Activated CD8-positive, alpha-beta T cell treated with anti-CD3 and anti-CD28 coated beads, Interleukin-2, amount 10 ng/mL, durations not matched to agents 7 days and 5 days (primary cell): ENCODE measurements at regions of chr3 and their contacts with region 1.

Region 1: DNA sequence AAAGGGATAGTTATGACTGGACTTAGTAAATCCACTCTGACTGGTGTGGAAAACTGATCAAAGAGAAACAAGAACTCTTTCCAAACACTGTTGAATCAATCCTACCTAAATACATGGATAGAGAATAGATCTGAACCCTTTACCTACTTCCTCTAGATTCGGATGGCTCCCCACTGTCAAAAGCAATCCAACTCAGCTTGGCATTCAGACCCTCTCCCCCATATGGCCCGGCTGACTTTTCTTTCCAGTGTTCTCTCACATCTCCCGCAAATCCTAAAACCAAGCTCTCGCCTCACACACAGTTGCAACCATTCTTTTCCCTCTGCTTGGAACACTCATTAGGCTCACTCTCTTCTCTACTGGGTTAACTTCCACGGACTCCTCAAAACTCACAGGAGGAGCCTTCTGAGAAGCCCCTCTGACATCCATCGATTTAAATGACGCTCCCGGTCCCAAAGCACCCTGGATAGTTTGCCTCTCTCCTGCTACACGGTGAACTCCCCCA is 639 bp downstream of the SPICE1 start:
- DNase-seq: no peak
- ATAC-seq: peak; percentile 5
- H3K4me3 Mint-ChIP-seq: no peak overlapping the region
- H3K27ac Mint-ChIP-seq: no peak overlapping the region
- H3K4me1 Mint-ChIP-seq: peaks cover 11% of the 10 kb centered on the region
- H3K27me3 Mint-ChIP-seq: peaks cover 16% of the 10 kb centered on the region

Region 2: DNA sequence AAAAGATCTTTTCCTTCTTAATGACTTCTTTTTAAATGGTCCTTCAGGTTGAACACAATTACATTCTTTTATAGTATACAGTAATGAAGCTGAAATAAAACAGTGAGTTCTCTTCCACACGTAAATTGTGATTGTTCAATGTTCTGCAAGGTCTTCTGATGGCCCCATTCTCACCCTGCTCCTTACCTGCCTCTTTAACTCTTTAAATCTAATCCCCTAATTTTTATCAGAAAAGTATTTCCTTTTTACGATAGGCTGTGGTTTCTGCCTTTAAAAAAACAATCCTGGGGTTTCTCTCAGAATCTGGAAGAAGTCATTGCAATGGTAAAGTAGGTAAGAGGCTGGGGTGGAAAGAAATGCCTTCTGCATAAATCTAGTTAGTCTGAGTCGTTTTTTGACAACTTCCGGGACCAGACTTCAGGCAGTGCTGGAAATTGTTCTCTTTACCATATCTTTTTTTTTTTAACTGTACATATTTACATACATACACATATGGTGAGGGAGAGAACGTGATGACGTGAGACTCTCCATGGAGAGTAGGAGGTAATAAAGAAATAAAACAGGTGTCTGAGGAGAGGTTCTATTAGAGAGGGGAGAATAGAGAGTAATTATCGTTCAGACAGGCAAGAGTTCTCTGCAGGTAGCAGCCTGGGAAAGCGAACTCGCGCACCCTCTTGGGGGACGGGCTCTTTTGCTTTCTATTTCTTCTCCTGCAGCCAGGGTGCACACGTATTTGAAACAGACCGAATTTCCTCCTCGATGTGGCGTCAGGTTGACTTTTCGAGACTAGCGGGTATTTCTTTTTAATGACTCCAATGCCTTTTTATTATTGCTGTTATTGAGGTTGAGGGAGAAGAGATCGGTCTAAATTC is 17.7 kb after region 1 on chr3 and contains the start of gene SIDT1:
- CTCF ChIA-PET with region 1: interaction called, 18 read pairs
- POLR2A ChIA-PET with region 1: interaction called, 24 read pairs
- DNase-seq: peak; percentile 86
- ATAC-seq: peak; percentile 83
- H3K4me3 Mint-ChIP-seq: peak within 1 kb of the TSS; percentile 92
- H3K27ac Mint-ChIP-seq: peak within 1 kb of the TSS; percentile 98
- H3K4me1 Mint-ChIP-seq: peaks cover 49% of the 10 kb centered on the region
- H3K27me3 Mint-ChIP-seq: peaks cover 3% of the 10 kb centered on the region
- total RNA-seq, gene SIDT1: 34.8 to 35.0 TPM